H1 (cell line): ENCODE measurements at regions of chr11 and their contacts with region 1.

Region 1: GRCh38 chr11:117171404-117172061 is 7.0 kb upstream of the SIDT2 start:
- DNase-seq: no peak
- H3K4me3 ChIP-seq: no peak overlapping the region
- H3K27ac ChIP-seq: no peak overlapping the region
- H3K4me1 ChIP-seq: no peaks in the 10 kb centered on the region
- H3K27me3 ChIP-seq: no peaks in the 10 kb centered on the region
- CTCF ChIP-seq: no peak
- EP300 ChIP-seq: no peak
- POLR2A ChIP-seq: peak in 1 of 2 experiments; percentile 36; a peak in 1 of 3 replicates
- RAD21 ChIP-seq: no peak

Region 2: GRCh38 chr11:117117681-117118080 is 53.9 kb before region 1 on chr11:
- CTCF ChIA-PET with region 1: no interaction called
- POLR2A ChIA-PET with region 1: no interaction called
- DNase-seq: no peak
- H3K4me3 ChIP-seq: no peak overlapping the region
- H3K27ac ChIP-seq: no peak overlapping the region
- H3K4me1 ChIP-seq: no peaks in the 10 kb centered on the region
- H3K27me3 ChIP-seq: no peaks in the 10 kb centered on the region
- CTCF ChIP-seq: no peak
- EP300 ChIP-seq: no peak
- POLR2A ChIP-seq: no peak
- RAD21 ChIP-seq: no peak

Region 3: DNA sequence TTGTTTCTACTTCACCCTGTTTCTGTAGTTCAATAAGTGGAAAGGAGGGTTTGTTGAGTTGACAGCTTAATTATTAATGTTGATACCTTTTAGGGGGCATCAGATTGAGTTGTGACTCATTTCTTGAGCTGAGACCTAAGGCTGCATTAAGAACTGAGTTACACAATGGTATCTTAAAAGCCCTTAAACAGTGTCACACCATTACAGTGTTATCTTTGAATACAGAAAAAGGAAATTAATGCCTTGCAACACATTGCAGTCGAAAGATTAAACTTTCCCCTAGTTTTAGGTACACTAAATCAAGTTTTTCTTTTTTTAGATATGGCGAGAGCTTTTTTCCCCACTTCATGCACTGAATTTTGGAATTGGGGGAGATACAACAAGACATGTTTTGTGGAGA is 10.7 kb before region 1 on chr11:
- CTCF ChIA-PET with region 1: interaction called, 5 read pairs
- POLR2A ChIA-PET with region 1: interaction called, 35 read pairs
- DNase-seq: no peak
- H3K4me3 ChIP-seq: no peak overlapping the region
- H3K27ac ChIP-seq: no peak overlapping the region
- H3K4me1 ChIP-seq: no peaks in the 10 kb centered on the region
- H3K27me3 ChIP-seq: no peaks in the 10 kb centered on the region
- CTCF ChIP-seq: no peak
- EP300 ChIP-seq: no peak
- POLR2A ChIP-seq: no peak
- RAD21 ChIP-seq: no peak

Region 4: DNA sequence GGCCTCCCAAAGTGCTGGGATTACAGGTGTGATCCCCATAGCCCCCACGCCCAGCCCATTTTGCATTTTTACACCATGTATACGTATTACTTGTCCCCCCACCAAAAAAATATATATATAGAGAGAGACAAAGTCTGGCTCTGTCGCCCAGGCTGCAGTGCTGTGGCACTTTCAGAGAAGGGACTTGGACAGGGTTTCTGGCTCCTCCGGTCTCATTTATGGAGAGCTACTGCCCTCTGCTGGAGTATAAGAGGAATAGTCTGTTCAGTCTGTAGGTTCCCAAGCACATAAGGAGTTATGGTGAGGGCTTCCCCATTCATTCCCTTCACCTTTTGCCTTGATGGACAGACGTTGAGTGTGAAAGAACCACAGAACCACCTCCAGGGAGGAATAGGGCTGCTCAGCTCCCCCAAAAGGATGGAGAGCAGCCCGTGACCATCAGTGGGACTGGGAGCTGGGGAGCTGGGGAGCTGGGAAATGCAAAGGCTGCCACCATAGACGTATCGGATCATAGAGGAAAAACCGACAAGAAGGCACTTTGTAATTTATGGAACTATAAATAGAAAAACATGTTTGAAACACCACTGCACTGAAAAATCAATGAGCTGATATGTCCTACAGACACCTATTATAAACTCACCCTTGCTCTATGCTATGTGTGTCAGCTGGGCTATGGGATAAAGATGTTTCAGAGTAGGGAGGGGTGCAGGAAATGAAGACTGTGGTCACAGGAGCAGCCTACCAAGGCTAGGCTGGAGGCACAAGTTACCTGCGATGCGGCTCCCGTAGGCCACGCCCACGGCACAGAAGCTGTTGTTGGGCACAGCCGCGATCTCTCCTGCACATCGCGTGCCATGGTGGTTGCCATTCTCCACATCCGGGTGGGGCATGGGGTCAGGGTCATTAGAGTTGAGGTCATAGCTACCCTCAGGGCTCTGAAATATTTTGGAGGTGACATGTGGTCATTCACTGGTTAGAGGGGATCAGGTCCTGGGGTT is 55.2 kb after region 1 on chr11:
- CTCF ChIA-PET with region 1: interaction called, 359 read pairs
- POLR2A ChIA-PET with region 1: interaction called, 6 read pairs
- DNase-seq: no peak
- H3K4me3 ChIP-seq: no peak overlapping the region
- H3K27ac ChIP-seq: no peak overlapping the region
- H3K4me1 ChIP-seq: peaks cover 0 to 6% (median under 1%) of the 10 kb centered on the region in 4 experiments; a peak in 2 of 7 replicates
- H3K27me3 ChIP-seq: no peaks in the 10 kb centered on the region
- CTCF ChIP-seq: peak; percentile 1 to 92 (median 78)
- EP300 ChIP-seq: no peak
- POLR2A ChIP-seq: no peak
- RAD21 ChIP-seq: peak; percentile 94